ENCODE measurements at regions of chr2 and their contacts with region 1.

Region 1: DNA sequence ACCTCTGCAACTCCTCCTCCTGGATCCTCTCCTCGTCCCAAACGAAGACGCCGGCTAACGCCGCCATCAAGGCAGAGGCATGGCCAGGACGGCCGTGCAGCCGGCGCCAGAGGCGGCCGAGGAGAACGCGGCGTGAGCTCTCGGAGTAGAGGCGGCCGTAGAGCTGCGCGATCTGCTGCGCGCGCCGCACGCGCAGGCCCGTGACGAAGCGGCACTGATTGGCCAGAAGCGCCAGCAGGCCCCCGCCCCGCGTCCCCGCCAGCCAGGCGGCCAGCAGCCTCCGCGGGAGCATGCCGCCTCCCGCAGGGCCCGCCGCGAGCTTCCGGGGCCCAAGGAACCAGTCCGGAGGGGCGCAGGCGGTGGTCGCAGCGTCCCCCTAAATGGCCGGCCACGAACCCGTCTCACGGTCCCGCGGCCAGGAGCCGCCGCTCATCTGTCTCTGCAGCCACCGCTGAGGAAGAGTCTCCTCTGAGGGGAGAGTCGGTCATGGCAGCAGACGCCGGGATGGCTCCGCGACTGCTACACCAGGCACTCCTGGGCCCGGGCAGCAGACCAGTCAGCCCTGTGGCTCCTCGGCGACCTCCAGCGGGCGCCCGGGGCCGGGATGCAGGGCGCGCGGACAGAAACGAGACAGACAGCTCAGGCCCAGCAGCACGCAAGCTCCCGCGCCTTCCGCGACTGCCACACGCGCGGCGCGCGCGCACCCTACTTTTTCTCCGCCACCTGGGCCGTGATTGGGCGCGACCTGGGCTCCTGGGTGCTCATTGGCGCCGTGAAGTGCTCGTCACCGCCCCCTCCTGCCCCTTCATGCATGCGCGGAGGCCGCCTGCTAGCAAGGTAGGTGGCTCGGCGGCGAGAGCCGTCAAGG is at the start of gene STARD7:
- DNase-seq: peak; percentile 99
- ATAC-seq: peak; percentile 95
- H3K4me3 Mint-ChIP-seq: peak within 1 kb of the TSS; percentile 100
- H3K27ac Mint-ChIP-seq: peak within 1 kb of the TSS; percentile 98
- H3K4me1 Mint-ChIP-seq: peaks cover 48% of the 10 kb centered on the region
- H3K27me3 Mint-ChIP-seq: no peaks in the 10 kb centered on the region
- CTCF ChIP-seq: no peak
- total RNA-seq, gene STARD7: 199 to 217 TPM (median 201 TPM) in 3 replicates

Region 2: DNA sequence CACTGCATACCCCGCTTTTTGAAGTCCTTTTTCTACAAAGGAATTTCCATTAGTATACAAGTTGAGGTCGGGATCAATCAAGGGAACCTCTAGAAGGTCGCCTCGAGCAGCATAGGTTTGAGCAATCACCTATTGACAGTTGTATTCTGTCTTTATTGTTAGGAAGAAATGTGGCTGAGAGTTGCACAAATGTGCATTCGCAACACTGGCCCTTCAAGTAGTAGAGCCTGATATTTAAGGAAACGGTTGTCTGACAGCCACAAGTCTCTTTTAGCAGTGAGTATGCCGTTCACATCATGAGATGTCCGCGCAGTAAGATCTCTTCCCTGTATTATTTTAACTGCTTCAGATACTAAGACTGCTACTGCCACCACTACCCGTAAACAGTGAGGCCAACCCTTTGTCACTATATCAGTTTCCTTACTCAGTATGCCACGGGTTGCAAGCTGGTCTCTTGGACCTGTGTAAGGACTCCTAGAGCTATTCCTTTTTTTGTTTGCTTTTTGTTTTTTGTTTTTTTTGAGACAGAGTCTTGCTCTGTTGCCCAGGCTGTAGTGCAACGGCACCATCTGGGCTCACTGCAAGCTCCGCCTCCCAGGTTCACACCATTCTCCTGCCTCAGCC is 10.2 kb after region 1 on chr2:
- CTCF ChIA-PET with region 1: no interaction called
- POLR2A ChIA-PET with region 1: no interaction called
- DNase-seq: no peak
- ATAC-seq: no peak
- H3K4me3 Mint-ChIP-seq: no peak overlapping the region
- H3K27ac Mint-ChIP-seq: no peak overlapping the region
- H3K4me1 Mint-ChIP-seq: peaks cover 12% of the 10 kb centered on the region
- H3K27me3 Mint-ChIP-seq: no peaks in the 10 kb centered on the region
- CTCF ChIP-seq: no peak

Region 3: DNA sequence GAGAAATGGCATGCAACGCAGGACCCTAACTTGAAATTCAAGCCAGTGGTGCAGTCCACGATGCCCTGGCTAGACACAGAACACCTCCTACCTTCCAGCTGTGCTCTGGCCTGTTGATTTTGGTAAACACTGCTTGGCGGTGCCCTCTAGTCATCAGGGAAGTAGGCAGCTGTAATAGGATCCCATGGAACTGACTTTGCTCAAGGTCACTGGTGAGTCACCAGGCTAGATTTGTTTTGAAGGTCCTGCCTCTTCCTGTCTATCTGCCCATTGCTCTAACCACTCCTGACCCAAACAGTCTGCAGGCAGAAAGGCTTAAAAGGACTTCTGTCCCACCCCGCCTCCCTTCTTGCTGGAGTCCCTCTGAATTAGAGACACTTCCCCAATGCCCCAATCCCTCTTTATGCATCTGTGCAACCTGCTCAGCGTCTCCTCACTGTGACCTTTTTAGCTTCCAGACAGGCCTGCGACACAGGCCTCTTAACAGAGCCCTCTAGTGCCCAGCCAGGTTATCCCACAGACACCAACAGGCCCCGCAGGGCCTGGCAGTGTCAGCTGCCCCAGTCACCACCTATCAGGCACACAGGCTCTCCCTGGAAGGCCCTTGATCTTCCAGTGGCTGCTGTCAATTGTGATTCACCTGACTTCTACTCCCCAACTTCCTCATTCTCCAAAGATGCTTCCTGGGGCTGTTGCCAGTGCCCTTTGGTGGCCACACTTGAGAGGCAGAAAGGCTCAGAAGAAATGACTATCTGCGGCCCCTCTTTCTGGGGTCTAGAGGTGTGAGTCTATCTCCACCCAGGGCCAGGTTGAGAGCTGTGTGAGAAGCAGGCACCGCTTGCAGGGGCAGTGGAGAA is 52.3 kb after region 1 on chr2:
- CTCF ChIA-PET with region 1: interaction called, 15 read pairs
- POLR2A ChIA-PET with region 1: interaction called, 7 read pairs
- DNase-seq: peak; percentile 59
- ATAC-seq: peak; percentile 91
- H3K4me3 Mint-ChIP-seq: peak overlapping the region; percentile 25; the same call in 1 of the 2 replicates
- H3K27ac Mint-ChIP-seq: peak overlapping the region; percentile 97
- H3K4me1 Mint-ChIP-seq: peaks cover 30% of the 10 kb centered on the region
- H3K27me3 Mint-ChIP-seq: no peaks in the 10 kb centered on the region
- CTCF ChIP-seq: no peak

Region 4: DNA sequence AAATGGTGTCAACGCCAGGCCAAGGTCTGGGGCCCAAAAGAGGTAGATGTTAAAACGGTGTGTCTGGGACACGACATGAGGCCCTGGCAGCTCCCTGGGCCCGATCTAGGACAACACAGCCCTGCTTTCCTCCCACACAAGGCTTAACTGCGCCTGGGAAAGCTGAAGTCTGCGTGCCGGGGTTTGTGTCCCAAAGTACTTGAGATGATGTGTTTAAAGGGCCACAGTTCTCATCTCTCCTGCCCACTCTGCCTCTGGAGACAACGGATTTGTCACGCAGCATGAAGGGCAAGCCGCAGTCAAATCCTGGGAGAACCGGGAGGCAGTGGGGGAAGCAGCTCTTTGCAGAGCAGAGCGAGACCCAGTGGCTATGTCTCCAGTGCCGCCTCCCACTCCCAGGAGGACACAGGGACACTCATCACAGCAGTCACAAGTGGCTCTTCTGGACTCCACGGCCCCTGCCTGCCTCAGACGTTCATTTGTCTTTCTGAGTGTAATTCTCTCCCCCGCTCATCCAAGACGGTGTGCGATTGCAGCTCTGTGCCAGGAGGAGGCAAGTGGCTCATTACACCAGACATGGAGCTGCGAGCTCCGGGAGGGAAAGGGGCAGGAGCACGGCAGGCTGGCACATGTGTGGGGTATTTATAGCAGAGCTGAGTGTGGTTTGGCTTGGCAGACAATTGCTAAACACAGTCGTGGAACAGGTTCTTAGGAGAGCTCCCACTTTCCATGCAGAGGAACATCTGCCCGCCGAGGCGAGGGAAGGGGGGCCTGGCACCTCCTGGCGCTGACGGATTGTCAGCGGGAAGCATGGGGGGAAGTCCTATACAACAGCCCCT is 719.2 kb after region 1 on chr2:
- CTCF ChIA-PET with region 1: no interaction called
- POLR2A ChIA-PET with region 1: no interaction called
- DNase-seq: no peak
- ATAC-seq: peak; percentile 38; the same call in 1 of the 2 replicates
- H3K4me3 Mint-ChIP-seq: no peak overlapping the region
- H3K27ac Mint-ChIP-seq: no peak overlapping the region
- H3K4me1 Mint-ChIP-seq: peaks cover 23% of the 10 kb centered on the region
- H3K27me3 Mint-ChIP-seq: peaks cover 37% of the 10 kb centered on the region
- CTCF ChIP-seq: no peak